ENCODE measurements at regions of chr16 and their contacts with region 1.

Region 1: GRCh38 chr16:17416461-17417311 is 54.1 kb downstream of the XYLT1 start:
- DNase-seq: peak in 1 of 2 donors; percentile 63
- ATAC-seq: peak; percentile 5
- H3K4me3 ChIP-seq: no peak overlapping the region
- H3K27ac ChIP-seq: no peak overlapping the region
- H3K4me1 ChIP-seq: peaks cover 0 to 2% of the 10 kb centered on the region in 2 donors
- H3K27me3 ChIP-seq: no peaks in the 10 kb centered on the region

Region 2: GRCh38 chr16:16988963-16989362 is 427.7 kb before region 1 on chr16:
- intact Hi-C with region 1: no loop called
- DNase-seq: no peak
- ATAC-seq: no peak
- H3K4me3 ChIP-seq: no peak overlapping the region
- H3K27ac ChIP-seq: no peak overlapping the region
- H3K4me1 ChIP-seq: no peaks in the 10 kb centered on the region
- H3K27me3 ChIP-seq: no peaks in the 10 kb centered on the region

Region 3: GRCh38 chr16:17277977-17278381 is 138.7 kb before region 1 on chr16:
- intact Hi-C with region 1: no loop called
- DNase-seq: peak in 1 of 2 donors; percentile 53
- ATAC-seq: no peak
- H3K4me3 ChIP-seq: no peak overlapping the region
- H3K27ac ChIP-seq: no peak overlapping the region
- H3K4me1 ChIP-seq: no peaks in the 10 kb centered on the region
- H3K27me3 ChIP-seq: no peaks in the 10 kb centered on the region

Region 4: DNA sequence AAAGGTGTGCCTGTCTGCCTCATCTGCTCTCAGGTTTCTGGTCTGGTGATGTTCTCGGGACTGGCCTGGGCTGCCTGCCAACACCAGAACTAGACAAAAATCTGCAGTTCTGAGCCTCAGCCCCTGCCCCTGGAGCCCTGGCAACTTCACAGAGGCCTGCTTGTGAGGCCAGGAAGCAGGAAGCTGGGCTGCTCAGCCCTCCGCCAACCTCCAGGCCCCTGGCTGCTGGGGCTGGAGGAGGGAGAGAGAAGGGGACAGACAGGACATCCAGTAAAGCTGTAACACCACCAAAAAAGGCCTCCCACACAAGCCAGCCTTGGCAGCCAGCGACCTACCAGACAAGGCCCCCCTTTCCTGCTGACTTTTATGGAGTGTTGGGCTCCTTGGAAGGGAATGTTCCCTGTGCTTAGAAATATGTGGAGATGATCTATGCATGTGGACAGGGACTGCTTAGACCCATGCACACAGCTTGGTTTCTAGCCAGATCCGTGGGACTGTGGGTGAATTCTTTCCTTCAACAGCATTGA is 103.5 kb before region 1 on chr16:
- intact Hi-C with region 1: loop called in 1 of 2 experiments (anchors 10 kb)
- DNase-seq: peak; percentile 70 to 79
- ATAC-seq: peak; percentile 49
- H3K4me3 ChIP-seq: no peak overlapping the region
- H3K27ac ChIP-seq: peak overlapping the region; percentile 46 to 47
- H3K4me1 ChIP-seq: no peaks in the 10 kb centered on the region
- H3K27me3 ChIP-seq: no peaks in the 10 kb centered on the region

Region 5: DNA sequence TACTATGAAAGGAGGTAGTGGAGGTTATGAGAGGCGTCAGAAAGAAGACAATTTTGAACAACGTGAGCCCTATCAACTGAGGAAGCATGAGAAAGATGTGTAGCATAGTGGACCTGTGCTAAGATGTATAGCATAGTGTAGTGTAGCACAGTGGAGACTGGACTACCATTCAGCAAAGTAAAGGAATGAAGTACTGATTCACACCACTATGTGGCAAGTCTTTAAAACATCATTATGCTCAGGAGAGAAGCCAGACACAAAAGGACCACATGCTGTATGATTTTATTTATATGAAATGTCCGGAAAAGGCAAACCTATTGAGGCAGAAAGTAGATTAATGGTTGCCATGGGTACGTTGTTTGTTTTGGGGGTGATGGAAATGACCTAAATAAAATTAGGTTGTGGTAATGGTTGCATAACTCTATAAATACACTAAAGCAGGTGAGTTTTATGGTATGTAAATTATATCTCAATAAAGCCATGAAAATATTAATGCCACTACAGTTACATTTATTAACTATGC is 74.5 kb after region 1 on chr16:
- intact Hi-C with region 1: no loop called
- DNase-seq: no peak
- ATAC-seq: no peak
- H3K4me3 ChIP-seq: no peak overlapping the region
- H3K27ac ChIP-seq: no peak overlapping the region
- H3K4me1 ChIP-seq: no peaks in the 10 kb centered on the region
- H3K27me3 ChIP-seq: no peaks in the 10 kb centered on the region

Region 6: DNA sequence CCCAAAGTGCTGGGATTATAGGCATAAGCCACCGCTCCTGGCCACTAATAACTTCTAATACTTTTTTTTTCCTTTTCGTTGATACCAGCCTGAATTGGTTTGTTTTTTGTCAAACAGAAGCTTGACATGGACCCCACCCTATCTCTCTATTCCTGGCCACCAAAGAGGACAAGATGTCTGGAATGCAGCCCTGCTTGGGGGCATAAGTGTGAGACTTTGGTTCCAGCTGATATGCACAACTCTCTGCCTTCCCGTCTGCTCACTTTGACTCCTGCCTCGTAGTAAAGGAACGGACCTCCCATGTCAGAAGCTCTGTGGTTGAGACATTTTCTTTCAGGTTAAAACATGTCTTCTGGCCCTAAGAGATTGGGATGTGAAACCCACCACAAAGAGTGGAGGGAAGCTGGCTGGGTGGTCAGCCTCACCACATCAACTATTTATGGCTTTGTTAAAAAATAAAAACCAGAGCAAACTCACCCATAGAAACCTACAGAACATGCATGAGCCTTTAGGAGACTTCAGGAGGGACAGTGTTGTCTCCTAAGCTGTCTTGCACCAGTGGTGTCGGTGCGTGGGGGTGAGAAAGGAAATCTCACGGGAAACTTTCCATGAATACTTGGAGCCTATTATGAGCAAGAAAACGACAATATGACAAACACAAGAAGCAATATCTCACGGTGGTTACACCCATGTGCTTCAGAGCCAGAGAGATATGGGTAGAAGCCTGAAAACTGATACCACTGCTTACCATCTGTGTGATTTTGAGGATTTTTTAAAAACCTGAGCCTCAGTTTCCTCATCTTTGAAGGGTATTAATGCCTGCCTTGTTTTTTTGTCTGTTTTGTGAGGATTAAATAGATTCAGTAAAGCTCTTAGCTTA is 115.7 kb after region 1 on chr16:
- intact Hi-C with region 1: no loop called
- DNase-seq: no peak
- ATAC-seq: no peak
- H3K4me3 ChIP-seq: no peak overlapping the region
- H3K27ac ChIP-seq: no peak overlapping the region
- H3K4me1 ChIP-seq: no peaks in the 10 kb centered on the region
- H3K27me3 ChIP-seq: no peaks in the 10 kb centered on the region

Measured in aorta (tissue), 5 donors.